Motor neuron (in vitro differentiated cells): ENCODE measurements at regions of chr7 and their contacts with region 1.

Region 1: GRCh38 chr7:10802526-10802925 is 171.1 kb upstream of the PHF14 start:
- ATAC-seq: no peak
- H3K4me3 ChIP-seq: no peak overlapping the region
- H3K27ac ChIP-seq: no peak overlapping the region
- H3K4me1 ChIP-seq: no peaks in the 10 kb centered on the region

Region 2: DNA sequence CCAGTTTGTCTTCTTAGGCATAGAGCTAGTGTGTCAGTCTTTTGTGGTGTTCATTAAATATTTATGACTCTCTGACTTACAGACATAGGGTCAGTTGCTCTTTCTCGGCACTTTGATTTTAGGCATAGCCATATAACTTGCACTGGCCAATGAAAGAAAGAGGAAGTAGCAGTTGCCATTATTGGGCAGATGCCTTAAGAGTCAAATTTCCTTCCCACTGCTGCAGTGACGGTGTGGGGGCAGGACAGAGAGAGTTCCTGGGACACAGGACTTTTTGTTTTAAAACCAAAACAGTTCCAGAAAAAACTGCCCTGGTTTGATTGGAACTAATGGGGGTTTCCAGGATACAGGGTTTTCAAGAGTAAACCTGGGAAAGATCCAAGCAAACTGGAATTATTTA is 110.9 kb after region 1 on chr7:
- in situ Hi-C with region 1: loop called in 1 of 9 experiments (anchors 25 kb)
- ATAC-seq: no peak
- H3K4me3 ChIP-seq: no peak overlapping the region
- H3K27ac ChIP-seq: no peak overlapping the region
- H3K4me1 ChIP-seq: peaks cover 0 to 7% of the 10 kb centered on the region in 2 donors

Region 3: DNA sequence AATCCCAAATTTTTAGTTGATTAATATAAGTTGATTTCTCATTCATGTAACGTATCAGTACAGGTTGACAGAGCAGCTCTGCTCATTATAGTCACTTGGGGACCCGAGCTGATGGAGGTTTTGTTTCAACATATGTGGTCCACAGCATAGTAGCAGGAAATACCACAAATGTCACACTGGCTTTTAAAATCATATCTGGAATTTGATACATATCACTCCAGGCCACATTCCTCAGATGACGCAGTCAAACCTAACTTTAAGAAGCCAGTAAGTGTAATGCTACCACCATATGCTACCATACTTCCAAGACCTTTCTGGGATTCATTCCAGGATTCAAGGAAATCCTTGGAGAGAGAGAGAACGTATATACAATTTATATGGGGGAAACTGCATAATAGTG is 327.5 kb after region 1 on chr7:
- in situ Hi-C with region 1: no loop called
- ATAC-seq: peak in 1 of 8 experiments; percentile 56
- H3K4me3 ChIP-seq: no peak overlapping the region
- H3K27ac ChIP-seq: no peak overlapping the region
- H3K4me1 ChIP-seq: peaks cover 7 to 67% of the 10 kb centered on the region in 2 donors